ENCODE measurements at regions of chr9 and their contacts with region 1.

Region 1: DNA sequence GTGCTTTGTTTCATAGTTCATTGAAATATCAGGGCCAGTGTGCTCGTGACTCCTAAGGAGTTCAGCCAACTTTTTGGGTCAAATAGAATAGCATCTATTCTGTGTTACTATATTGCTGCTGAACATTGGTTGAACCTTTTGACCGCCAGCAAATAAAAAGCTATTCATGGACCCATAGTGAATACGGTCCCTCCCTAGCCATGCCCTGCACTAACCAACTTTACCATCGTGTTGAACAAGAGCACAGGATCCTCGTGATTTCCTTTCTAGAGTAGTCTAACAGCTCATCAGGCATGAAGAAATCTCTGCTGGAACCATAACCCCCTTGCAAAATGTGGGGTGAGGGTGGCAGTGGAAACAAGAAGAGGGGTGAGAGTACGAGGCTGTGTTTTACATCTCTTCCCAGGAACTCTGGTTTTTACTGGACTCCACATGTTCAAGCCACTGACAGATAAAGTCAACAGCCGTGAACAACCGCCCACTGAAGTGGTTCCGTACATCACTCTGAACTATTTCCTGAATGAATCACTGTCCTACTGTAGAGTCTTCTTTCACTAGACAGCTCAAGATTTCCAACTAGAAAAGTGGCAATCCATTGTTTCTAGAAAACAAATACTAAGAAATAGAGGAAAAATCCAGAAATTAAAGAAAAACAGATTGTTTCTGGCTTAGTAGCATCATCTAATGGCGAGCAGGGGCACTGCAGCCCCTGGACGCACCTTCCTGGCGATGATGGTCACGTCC is 70.1 kb upstream of the SPATA31E1 start:
- DNase-seq: no peak
- ATAC-seq: no peak
- H3K4me3 ChIP-seq: no peak overlapping the region
- H3K27ac ChIP-seq: no peak overlapping the region
- H3K4me1 ChIP-seq: no peaks in the 10 kb centered on the region
- H3K27me3 ChIP-seq: no peaks in the 10 kb centered on the region
- CTCF ChIP-seq: peak; percentile 93

Region 2: DNA sequence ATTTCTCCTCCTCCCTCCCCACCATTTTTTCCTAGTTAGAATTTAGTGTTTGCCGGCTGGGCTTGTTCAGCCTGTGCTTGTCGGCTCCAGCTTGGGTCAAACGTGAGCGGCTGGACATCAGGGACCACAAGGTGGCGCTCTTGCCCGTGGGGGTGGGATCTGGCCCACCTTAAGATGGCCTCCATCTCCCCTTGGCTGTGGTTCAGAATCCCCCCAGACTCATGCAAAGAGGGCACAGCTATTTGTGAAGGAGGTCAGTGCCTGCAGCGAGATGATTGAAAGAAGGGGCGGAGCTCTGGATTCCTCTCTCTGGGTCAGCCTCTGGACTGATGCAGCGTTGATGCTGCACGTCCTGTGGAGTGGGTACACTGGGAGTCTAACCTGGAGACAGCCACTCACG is 1175.0 kb before region 1 on chr9:
- CTCF ChIA-PET with region 1: no interaction called
- POLR2A ChIA-PET with region 1: no interaction called
- in situ Hi-C with region 1: no loop called
- intact Hi-C with region 1: no loop called
- DNase-seq: no peak
- ATAC-seq: no peak
- H3K4me3 ChIP-seq: no peak overlapping the region
- H3K27ac ChIP-seq: no peak overlapping the region
- H3K4me1 ChIP-seq: no peaks in the 10 kb centered on the region
- H3K27me3 ChIP-seq: no peaks in the 10 kb centered on the region
- CTCF ChIP-seq: peak; percentile 51

Region 3: GRCh38 chr9:87678650-87679515 is 133.7 kb before region 1 on chr9:
- CTCF ChIA-PET with region 1: no interaction called
- POLR2A ChIA-PET with region 1: no interaction called
- in situ Hi-C with region 1: no loop called
- intact Hi-C with region 1: loop called (anchors 2 kb)
- DNase-seq: no peak
- ATAC-seq: no peak; the same call in none of the 2 replicates
- H3K4me3 ChIP-seq: no peak overlapping the region
- H3K27ac ChIP-seq: no peak overlapping the region
- H3K4me1 ChIP-seq: no peaks in the 10 kb centered on the region
- H3K27me3 ChIP-seq: no peaks in the 10 kb centered on the region
- CTCF ChIP-seq: peak; percentile 80

Region 4: DNA sequence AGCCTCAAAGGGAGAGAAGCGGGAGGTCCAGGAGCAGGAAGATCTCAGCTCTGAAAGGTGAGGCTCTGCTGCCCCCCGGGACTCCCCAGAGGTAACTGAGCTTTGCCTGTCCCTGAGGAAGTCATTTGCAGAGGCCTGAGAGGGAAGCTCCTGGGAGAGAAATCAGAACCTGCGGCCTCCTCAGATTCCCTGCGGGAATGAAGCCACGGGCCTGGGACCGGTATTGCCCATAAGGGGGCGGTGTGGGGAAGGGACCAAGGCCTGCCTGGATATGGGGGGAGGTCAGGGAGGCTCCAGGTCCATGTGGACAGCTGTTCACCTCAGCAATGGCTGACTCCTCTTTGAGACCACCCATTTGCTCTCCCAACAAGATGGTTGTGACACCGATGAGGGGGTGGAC is 71.4 kb after region 1 on chr9:
- CTCF ChIA-PET with region 1: no interaction called
- POLR2A ChIA-PET with region 1: no interaction called
- in situ Hi-C with region 1: no loop called
- intact Hi-C with region 1: no loop called
- DNase-seq: no peak
- ATAC-seq: no peak
- H3K4me3 ChIP-seq: no peak overlapping the region
- H3K27ac ChIP-seq: no peak overlapping the region
- H3K4me1 ChIP-seq: no peaks in the 10 kb centered on the region
- H3K27me3 ChIP-seq: no peaks in the 10 kb centered on the region
- CTCF ChIP-seq: peak; percentile 44

Region 5: GRCh38 chr9:87959916-87960581 is 147.5 kb after region 1 on chr9:
- CTCF ChIA-PET with region 1: no interaction called
- POLR2A ChIA-PET with region 1: no interaction called
- in situ Hi-C with region 1: no loop called
- intact Hi-C with region 1: no loop called
- DNase-seq: no peak
- ATAC-seq: no peak
- H3K4me3 ChIP-seq: no peak overlapping the region
- H3K27ac ChIP-seq: no peak overlapping the region
- H3K4me1 ChIP-seq: no peaks in the 10 kb centered on the region
- H3K27me3 ChIP-seq: no peaks in the 10 kb centered on the region
- CTCF ChIP-seq: no peak

Measured in Panc1 (cell line).